ENCODE measurements at regions of chr3 and their contacts with region 1.

Region 1: GRCh38 chr3:177928156-177928873 is 607.9 kb upstream of the KCNMB2 start:
- DNase-seq: peak; percentile 82
- ATAC-seq: peak; percentile 69
- H3K4me3 ChIP-seq: no peak overlapping the region
- H3K27ac ChIP-seq: peak overlapping the region; percentile 96
- H3K4me1 ChIP-seq: peaks cover 60% of the 10 kb centered on the region
- H3K27me3 ChIP-seq: no peaks in the 10 kb centered on the region
- CTCF ChIP-seq: no peak

Region 2: GRCh38 chr3:177810162-177810623 is 118.1 kb before region 1 on chr3:
- CTCF ChIA-PET with region 1: no interaction called
- POLR2A ChIA-PET with region 1: no interaction called
- intact Hi-C with region 1: loop called (anchors 1 kb)
- DNase-seq: peak; percentile 95
- ATAC-seq: peak; percentile 93
- H3K4me3 ChIP-seq: no peak overlapping the region
- H3K27ac ChIP-seq: peak overlapping the region; percentile 53
- H3K4me1 ChIP-seq: peaks cover 30% of the 10 kb centered on the region
- H3K27me3 ChIP-seq: no peaks in the 10 kb centered on the region
- CTCF ChIP-seq: no peak

Region 3: DNA sequence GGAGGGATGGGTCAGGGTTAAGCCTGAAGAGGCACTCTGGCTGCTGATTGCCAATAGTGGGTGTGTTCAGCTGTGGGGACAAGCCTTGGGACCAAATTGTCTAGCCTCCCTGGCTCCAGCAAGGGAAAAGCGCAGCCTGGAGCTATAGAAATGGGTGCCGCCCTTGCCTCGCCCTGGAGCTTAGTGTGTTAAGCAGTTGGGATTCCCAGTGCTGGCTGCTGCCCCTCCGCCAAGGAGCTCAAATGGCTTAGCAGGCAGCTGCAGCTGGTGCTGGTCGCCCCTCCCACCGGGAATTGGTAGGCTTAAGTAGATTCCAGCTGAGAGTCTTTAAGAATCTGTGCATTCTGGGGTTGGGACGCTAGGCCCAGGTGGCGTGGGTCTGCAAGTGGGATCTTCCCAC is 68.1 kb before region 1 on chr3:
- CTCF ChIA-PET with region 1: no interaction called
- POLR2A ChIA-PET with region 1: no interaction called
- intact Hi-C with region 1: no loop called
- DNase-seq: no peak
- ATAC-seq: no peak
- H3K4me3 ChIP-seq: no peak overlapping the region
- H3K27ac ChIP-seq: no peak overlapping the region
- H3K4me1 ChIP-seq: no peaks in the 10 kb centered on the region
- H3K27me3 ChIP-seq: no peaks in the 10 kb centered on the region
- CTCF ChIP-seq: no peak